Panc1 (cell line): ENCODE measurements at regions of chr3 and their contacts with region 1.

Region 1: DNA sequence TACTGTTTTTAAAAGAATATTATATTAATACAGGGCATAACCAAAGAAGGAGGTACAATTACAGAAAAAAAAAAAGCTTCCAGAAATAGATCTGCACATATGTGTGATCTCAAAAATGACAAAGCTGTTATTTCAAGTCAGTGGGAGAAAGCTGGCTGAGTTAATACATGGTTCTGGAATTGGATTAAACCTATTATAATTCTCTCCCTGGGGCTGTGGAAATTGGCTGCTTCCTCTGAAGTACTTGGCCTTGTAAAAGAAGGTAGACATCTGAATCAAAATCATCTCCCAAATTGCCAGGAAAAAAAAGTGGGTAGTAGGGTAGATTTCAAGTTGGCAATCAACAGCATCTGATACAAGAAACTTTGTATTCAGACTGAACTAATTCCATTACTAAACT is 723.9 kb upstream of the ALCAM start:
- DNase-seq: no peak
- ATAC-seq: no peak
- H3K4me3 ChIP-seq: no peak overlapping the region
- H3K27ac ChIP-seq: no peak overlapping the region
- H3K4me1 ChIP-seq: no peaks in the 10 kb centered on the region
- H3K27me3 ChIP-seq: no peaks in the 10 kb centered on the region
- CTCF ChIP-seq: no peak

Region 2: DNA sequence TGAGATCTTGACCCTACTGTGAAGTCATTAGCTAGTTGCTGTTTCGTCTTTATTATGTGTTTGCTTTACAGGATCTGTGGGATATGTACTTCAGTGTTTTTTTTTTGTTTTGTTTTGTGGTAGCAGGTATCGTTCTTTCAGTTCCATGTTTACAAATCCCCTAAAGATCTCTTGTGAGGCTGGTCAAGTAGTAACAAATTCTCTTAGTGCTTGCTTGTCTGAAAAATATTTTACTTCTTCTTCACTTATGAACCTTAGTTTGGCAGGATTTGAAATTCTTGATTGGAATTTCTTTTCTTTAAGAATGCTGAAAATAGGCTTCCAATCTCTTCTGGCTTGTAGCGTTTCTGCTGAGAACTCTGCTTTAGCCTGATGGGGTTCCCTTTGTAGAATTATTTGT is 488.1 kb after region 1 on chr3:
- CTCF ChIA-PET with region 1: no interaction called
- POLR2A ChIA-PET with region 1: interaction called, 11 read pairs
- in situ Hi-C with region 1: no loop called
- intact Hi-C with region 1: no loop called
- DNase-seq: no peak
- ATAC-seq: no peak
- H3K4me3 ChIP-seq: no peak overlapping the region
- H3K27ac ChIP-seq: no peak overlapping the region
- H3K4me1 ChIP-seq: no peaks in the 10 kb centered on the region
- H3K27me3 ChIP-seq: no peaks in the 10 kb centered on the region
- CTCF ChIP-seq: no peak